PC-9 (cell line): ENCODE measurements at regions of chr7 and their contacts with region 1.

Region 1: GRCh38 chr7:106476751-106477150 is 184.2 kb downstream of the CCDC71L start:
- DNase-seq: no peak
- H3K4me3 ChIP-seq: no peak overlapping the region
- H3K27ac ChIP-seq: no peak overlapping the region
- H3K4me1 ChIP-seq: no peaks in the 10 kb centered on the region; the same call in 1 of the 2 replicates
- H3K27me3 ChIP-seq: no peaks in the 10 kb centered on the region
- CTCF ChIP-seq: no peak

Region 2: GRCh38 chr7:106071356-106071998 is 405.3 kb before region 1 on chr7:
- CTCF ChIA-PET with region 1: no interaction called
- POLR2A ChIA-PET with region 1: no interaction called
- intact Hi-C with region 1: no loop called
- DNase-seq: peak; percentile 87 to 93
- H3K4me3 ChIP-seq: peak overlapping the region; percentile 24; the same call in 1 of the 2 replicates
- H3K27ac ChIP-seq: peak overlapping the region; percentile 95
- H3K4me1 ChIP-seq: peaks cover 61% of the 10 kb centered on the region
- H3K27me3 ChIP-seq: no peaks in the 10 kb centered on the region
- CTCF ChIP-seq: no peak

Region 3: GRCh38 chr7:106514881-106515280 is 38.1 kb after region 1 on chr7:
- CTCF ChIA-PET with region 1: no interaction called
- POLR2A ChIA-PET with region 1: no interaction called
- intact Hi-C with region 1: loop called (anchors 1 kb)
- DNase-seq: no peak
- H3K4me3 ChIP-seq: no peak overlapping the region
- H3K27ac ChIP-seq: no peak overlapping the region
- H3K4me1 ChIP-seq: no peaks in the 10 kb centered on the region
- H3K27me3 ChIP-seq: no peaks in the 10 kb centered on the region
- CTCF ChIP-seq: no peak

Region 4: DNA sequence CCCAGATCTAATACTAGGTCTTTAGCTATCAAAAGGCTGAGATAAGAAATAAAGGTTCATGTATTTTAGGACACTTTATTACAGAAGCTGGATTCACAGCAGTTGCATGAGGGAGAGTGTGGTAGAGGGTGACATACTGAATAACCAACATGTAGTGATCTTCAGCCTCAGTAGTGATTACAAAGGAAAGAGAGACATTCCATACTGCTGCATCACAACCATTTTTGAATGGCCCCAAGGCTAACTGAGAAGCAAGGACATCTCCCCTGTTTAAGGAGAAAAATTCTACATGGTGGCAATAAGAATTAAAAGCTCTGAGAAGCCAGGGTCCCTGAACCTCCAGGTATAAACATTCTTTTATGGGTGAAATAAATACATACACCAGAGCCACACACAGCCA is 1051.7 kb after region 1 on chr7:
- CTCF ChIA-PET with region 1: no interaction called
- POLR2A ChIA-PET with region 1: no interaction called
- intact Hi-C with region 1: no loop called
- DNase-seq: peak; percentile 14 to 51
- H3K4me3 ChIP-seq: no peak overlapping the region
- H3K27ac ChIP-seq: no peak overlapping the region
- H3K4me1 ChIP-seq: peaks cover 12% of the 10 kb centered on the region
- H3K27me3 ChIP-seq: no peaks in the 10 kb centered on the region
- CTCF ChIP-seq: no peak